ENCODE measurements at regions of chr1 and their contacts with region 1.

Region 1: DNA sequence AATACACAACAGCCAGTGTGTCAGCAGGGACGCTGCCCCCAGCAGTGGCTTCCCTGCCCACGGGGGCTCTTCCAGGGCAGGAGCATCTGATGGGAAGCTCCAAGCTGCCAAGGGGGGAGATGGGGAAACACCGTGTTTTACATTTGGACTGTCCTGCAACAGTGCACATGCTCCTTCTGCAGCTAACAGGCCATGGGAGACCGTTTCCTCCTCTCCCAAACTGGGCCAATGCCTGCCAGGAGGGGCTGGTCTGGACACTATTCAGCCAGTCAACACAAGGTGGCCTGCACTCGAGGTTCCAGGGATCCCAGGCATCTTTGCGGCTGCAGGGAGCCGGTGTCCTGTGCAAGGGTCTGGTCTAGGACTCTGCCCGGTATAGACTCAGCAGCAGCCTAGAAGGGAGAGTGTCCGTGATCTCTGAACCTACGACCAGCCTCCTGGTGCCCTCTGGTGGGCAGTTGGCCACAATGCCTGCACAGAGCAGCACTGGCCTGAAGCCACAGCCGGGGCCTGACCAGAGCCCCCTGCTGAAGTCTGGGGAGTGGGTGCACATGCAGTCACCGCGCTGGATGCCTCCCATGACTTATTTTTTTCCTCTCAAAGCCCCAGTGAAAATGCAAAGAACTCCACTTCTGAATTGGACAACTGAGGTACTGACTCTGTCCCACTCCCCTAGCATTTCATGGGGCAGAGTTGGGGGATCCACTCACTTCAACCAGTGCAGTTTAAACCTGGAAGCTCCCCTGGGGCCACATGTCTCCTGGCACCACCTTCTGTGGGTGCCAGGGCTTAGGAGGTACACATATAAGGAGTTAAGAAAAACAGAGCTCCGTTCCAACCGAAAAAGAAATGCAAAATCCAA is 33.3 kb downstream of the RCC2 start:
- DNase-seq: peak in 1 of 2 donors; percentile 65
- ATAC-seq: peak; percentile 85
- H3K4me3 ChIP-seq: no peak overlapping the region
- H3K27ac ChIP-seq: no peak overlapping the region
- H3K4me1 ChIP-seq: no peaks in the 10 kb centered on the region
- H3K27me3 ChIP-seq: no peaks in the 10 kb centered on the region

Region 2: GRCh38 chr1:17125756-17126237 is 280.3 kb before region 1 on chr1:
- intact Hi-C with region 1: loop called (anchors 5 to 10 kb)
- DNase-seq: peak; percentile 92 to 97
- ATAC-seq: peak; percentile 91
- H3K4me3 ChIP-seq: no peak overlapping the region
- H3K27ac ChIP-seq: no peak overlapping the region
- H3K4me1 ChIP-seq: no peaks in the 10 kb centered on the region
- H3K27me3 ChIP-seq: no peaks in the 10 kb centered on the region

Region 3: GRCh38 chr1:17141441-17142197 is 264.5 kb before region 1 on chr1:
- intact Hi-C with region 1: no loop called
- DNase-seq: no peak
- ATAC-seq: no peak
- H3K4me3 ChIP-seq: no peak overlapping the region
- H3K27ac ChIP-seq: no peak overlapping the region
- H3K4me1 ChIP-seq: no peaks in the 10 kb centered on the region
- H3K27me3 ChIP-seq: no peaks in the 10 kb centered on the region

Region 4: GRCh38 chr1:17314491-17315022 is 91.6 kb before region 1 on chr1:
- intact Hi-C with region 1: no loop called
- DNase-seq: no peak
- ATAC-seq: no peak
- H3K4me3 ChIP-seq: no peak overlapping the region
- H3K27ac ChIP-seq: no peak overlapping the region
- H3K4me1 ChIP-seq: no peaks in the 10 kb centered on the region
- H3K27me3 ChIP-seq: no peaks in the 10 kb centered on the region

Measured in aorta (tissue), 5 donors.